Tibial artery (tissue), 4 donors: ENCODE measurements at regions of chr12 and their contacts with region 1.

Region 1: GRCh38 chr12:79381248-79382208 is 309.2 kb downstream of the PAWR start:
- DNase-seq: no peak
- H3K4me3 ChIP-seq: no peak overlapping the region
- H3K27ac ChIP-seq: no peak overlapping the region
- H3K4me1 ChIP-seq: no peaks in the 10 kb centered on the region
- H3K27me3 ChIP-seq: no peaks in the 10 kb centered on the region
- CTCF ChIP-seq: no peak

Region 2: GRCh38 chr12:79424109-79424721 is 42.7 kb after region 1 on chr12:
- intact Hi-C with region 1: no loop called
- DNase-seq: no peak
- H3K4me3 ChIP-seq: no peak overlapping the region
- H3K27ac ChIP-seq: peak overlapping the region; percentile 12 to 27
- H3K4me1 ChIP-seq: peaks cover 0 to 62% (median 17%) of the 10 kb centered on the region in 4 donors
- H3K27me3 ChIP-seq: no peaks in the 10 kb centered on the region
- CTCF ChIP-seq: no peak

Region 3: DNA sequence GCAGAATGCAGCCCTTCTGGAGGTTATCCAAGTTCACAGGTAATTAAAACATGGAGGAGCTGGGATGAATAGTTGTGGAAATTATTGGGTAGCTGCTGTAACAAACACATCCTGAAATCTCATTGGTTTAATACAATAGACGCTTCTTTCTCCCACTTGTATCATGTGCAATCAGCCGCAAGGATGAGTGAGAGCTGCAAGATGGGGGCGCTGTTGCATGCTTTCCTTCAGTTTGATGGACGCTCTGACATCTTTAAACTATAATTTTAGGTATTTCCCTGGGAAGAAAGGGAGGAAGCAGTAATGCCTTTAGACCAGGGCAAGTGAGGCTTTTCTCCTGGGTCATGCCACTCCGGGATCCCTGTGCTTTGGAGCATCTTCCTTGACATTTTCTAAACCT is 130.5 kb after region 1 on chr12:
- intact Hi-C with region 1: no loop called
- DNase-seq: no peak
- H3K4me3 ChIP-seq: no peak overlapping the region
- H3K27ac ChIP-seq: no peak overlapping the region
- H3K4me1 ChIP-seq: no peaks in the 10 kb centered on the region
- H3K27me3 ChIP-seq: no peaks in the 10 kb centered on the region
- CTCF ChIP-seq: no peak

Region 4: DNA sequence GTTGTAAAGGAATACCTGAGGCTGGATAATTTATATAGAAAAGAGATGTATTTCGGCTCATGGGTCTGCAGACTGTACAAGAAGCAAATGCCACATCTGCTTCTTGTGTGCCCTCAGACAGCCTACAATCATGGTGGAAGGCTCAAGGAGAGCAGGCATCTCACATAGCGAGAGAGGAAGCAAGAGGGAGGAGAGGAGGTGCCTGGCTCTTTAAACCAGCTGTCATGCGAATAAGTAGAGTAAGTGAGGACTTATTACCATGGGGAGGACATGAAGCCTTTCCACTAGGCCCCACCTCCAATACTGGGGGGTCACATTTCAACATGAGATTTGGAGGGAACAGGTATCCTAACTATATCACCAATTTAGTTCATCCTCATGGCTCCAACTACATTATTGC is 1815.1 kb after region 1 on chr12:
- intact Hi-C with region 1: loop called (anchors 10 kb)
- DNase-seq: no peak
- H3K4me3 ChIP-seq: no peak overlapping the region
- H3K27ac ChIP-seq: no peak overlapping the region
- H3K4me1 ChIP-seq: no peaks in the 10 kb centered on the region
- H3K27me3 ChIP-seq: no peaks in the 10 kb centered on the region
- CTCF ChIP-seq: no peak